Activated CD4-positive, alpha-beta memory T cell treated with anti-CD3 and anti-CD28 coated beads, Interleukin-2, amount 10 ng/mL, durations not matched to agents 7 days and 5 days (primary cell): ENCODE measurements at regions of chr5 and their contacts with region 1.

Region 1: GRCh38 chr5:181223058-181223728 is at the start of gene TRIM41:
- DNase-seq: peak; percentile 98
- H3K4me3 Mint-ChIP-seq: peak within 1 kb of the TSS; percentile 99
- H3K27ac Mint-ChIP-seq: peak within 1 kb of the TSS; percentile 100
- H3K4me1 Mint-ChIP-seq: peaks cover 69% of the 10 kb centered on the region
- H3K27me3 Mint-ChIP-seq: peaks cover 4% of the 10 kb centered on the region
- total RNA-seq, gene TRIM41: 42.4 to 43.7 TPM

Region 2: GRCh38 chr5:181207214-181208107 is 15.7 kb before region 1 on chr5:
- CTCF ChIA-PET with region 1: interaction called, 5 read pairs
- POLR2A ChIA-PET with region 1: interaction called, 45 read pairs
- DNase-seq: peak; percentile 80
- H3K4me3 Mint-ChIP-seq: peak overlapping the region; percentile 81
- H3K27ac Mint-ChIP-seq: peak overlapping the region; percentile 85
- H3K4me1 Mint-ChIP-seq: peaks cover 37% of the 10 kb centered on the region
- H3K27me3 Mint-ChIP-seq: peaks cover 32% of the 10 kb centered on the region